ENCODE measurements at regions of chr15 and their contacts with region 1.

Region 1: GRCh38 chr15:29090617-29091466 is 178.8 kb downstream of the NSMCE3 start:
- DNase-seq: peak in 38 of 42 donors; percentile 29 to 86 (median 63)

Region 2: GRCh38 chr15:28786521-28786920 is 304.3 kb before region 1 on chr15:
- intact Hi-C with region 1: no loop called
- DNase-seq: no peak

Region 3: DNA sequence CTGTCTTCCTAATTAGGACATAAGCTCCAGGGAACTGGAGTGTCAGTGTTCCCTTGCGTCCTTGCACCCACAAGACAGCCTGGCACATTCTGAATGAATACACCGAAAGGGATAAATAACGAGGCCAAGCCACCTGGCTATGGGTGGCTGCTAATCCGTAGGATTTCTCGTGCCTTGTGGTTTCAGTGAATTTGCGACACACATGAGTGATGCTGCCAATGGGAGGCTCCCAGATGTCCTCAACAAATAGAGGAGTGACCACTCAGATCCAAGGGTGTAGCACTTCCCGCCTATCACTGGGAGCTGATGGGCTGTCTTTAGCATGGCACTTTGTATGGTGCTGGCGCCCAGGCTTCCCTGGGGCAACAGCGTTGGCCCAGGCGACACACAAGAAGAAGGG is 161.6 kb before region 1 on chr15:
- intact Hi-C with region 1: loop called (anchors 5 kb)
- DNase-seq: peak in 2 of 42 donors; percentile 14 to 20

Region 4: GRCh38 chr15:28975766-28976179 is 115.1 kb before region 1 on chr15:
- intact Hi-C with region 1: loop called (anchors 5 kb)
- DNase-seq: peak in 21 of 42 donors; percentile 39 to 85 (median 62)

Region 5: DNA sequence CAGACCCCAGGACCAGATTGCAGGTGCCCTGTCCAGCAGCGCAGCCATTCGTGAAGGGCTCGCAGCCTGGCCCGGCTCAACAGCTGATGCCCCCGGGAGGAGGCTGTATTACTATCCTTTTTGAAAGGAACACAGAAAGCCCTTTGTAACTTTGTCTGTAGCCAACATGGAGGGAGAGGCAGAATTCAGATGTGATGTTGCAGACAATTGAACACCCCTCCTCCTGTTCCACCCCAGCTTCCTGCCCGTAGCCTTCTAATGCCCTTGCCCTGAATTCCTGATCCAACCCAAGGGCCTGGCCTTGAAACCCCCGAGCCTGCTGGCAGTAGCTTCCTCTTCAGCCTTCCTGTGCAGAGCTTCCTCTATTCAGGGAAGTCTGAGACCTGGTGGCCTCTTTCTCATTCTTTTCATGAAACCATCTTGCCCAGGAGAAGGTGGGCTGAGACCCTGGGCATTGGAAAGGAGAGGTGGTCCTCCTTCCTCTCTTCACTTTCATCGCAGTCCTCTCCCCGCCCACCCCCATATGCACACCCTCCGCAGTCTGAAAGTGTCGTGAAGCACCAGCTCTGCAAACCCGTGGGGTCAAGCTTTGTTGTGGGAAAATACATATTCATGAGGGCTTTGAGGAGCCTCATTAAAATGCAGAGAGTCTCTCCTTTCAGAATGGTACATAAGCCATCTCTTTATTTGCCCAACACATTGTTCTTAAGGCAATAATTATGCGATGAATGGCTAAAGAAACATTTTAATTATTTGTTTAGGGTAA is 95.8 kb before region 1 on chr15:
- intact Hi-C with region 1: loop called (anchors 5 kb)
- DNase-seq: peak in 35 of 42 donors; percentile 52 to 87 (median 70)

Region 6: GRCh38 chr15:29045717-29046116 is 45.1 kb before region 1 on chr15:
- intact Hi-C with region 1: no loop called
- DNase-seq: peak in 5 of 42 donors; percentile 13 to 43 (median 32)